GM12878 (cell line): ENCODE measurements at regions of chr14 and their contacts with region 1.

Region 1: DNA sequence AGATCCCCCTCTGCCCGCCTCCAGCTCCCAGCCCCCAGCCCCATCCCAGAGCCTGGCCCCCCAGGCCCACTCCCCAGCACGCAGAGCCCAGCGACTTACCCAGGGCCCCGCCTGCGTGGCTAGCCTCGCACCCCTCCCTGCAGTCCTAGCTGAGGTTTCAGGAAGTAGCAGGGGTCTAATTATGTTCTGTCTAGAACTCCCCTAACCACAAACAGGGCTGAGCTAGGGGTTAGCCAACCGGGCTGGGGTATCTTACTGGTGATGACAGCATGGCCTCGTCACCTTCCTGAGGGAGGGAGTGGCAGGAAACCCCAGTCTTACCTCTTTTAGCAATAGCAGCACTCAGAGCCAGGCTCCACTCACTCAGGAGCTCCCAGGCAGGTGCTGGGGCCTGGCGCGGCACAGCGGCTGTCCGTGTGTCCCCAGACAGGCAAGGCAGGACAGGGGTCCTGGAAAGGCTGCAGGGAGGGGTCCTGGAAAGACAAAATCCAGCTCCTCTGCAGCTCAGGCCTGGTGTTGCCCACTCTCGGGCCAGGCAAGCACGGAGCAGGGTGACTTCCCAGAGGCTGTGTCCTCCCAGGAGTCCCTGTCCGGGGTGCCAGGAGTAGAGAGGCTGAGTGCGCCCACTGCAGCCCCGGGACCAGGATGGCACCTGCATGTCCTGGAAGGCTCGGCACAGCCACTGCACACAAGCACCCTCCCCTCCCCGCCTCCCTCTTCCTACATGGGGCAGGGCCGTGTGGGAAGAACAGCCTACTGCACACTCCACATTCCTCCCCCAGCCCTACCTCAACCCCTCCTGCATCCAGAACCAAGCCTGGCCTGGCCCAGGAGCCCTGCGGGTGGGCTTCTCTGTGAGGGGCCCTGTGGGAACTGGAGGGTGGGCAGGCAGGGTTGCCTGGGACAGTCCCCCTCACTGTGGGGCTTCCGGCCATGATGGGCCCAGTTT is at the start of gene GPR132:
- DNase-seq: peak; percentile 93
- ATAC-seq: peak; percentile 54
- H3K4me3 ChIP-seq: peak within 1 kb of the TSS; percentile 64
- H3K27ac ChIP-seq: peak within 1 kb of the TSS; percentile 93
- H3K4me1 ChIP-seq: peaks cover 69% of the 10 kb centered on the region
- H3K27me3 ChIP-seq: no peaks in the 10 kb centered on the region
- CTCF ChIP-seq: no peak
- EP300 ChIP-seq: peak; percentile 67; a peak in 2 of 4 replicates
- POLR2A ChIP-seq: peak; percentile 91
- RAD21 ChIP-seq: no peak
- polyA plus RNA-seq, gene GPR132: 1.9 to 2.2 TPM

Region 2: DNA sequence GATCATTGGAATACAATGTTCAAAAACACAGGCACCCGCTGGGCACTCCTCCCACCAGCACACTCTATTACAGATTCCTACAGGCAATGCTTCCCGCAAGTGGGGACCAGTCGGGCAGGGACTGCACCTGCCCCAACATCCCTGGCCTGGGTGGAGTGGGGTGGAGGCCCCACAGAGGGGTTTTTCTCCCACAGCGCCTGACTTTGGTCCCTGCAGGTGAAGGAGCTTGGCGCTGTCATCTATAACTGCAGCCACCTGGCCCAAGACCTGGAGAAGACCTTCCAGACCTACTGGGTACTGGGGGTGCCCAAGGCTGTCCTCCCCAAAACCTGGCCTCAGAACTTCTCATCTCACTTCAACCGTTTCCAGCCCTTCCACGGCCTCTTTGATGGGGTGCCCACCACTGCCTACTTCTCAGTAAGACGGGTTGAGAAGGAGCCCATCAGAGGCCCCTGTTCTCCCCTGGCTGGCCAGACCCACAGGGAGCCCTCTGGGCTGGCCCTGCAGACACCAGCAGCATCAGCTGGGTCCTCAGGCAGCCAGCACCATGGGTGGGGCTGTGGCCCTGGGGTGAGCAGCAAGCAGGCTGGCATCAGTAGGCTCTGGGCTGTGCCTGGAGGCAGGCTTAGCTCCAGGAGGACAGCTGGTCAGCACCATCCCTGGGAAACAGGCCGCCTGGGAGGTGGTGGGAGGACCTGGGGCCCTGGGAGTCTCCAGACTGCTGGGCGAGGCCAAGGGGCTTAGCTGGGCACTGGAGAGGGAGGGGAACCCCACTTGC is 134.8 kb before region 1 on chr14:
- CTCF ChIA-PET with region 1: no interaction called
- POLR2A ChIA-PET with region 1: no interaction called
- RAD21 ChIA-PET with region 1: no interaction called
- SMC1A ChIA-PET with region 1: no interaction called
- in situ Hi-C with region 1: no loop called
- intact Hi-C with region 1: no loop called
- DNase-seq: no peak
- ATAC-seq: no peak
- H3K4me3 ChIP-seq: no peak overlapping the region
- H3K27ac ChIP-seq: no peak overlapping the region
- H3K4me1 ChIP-seq: peaks cover 19% of the 10 kb centered on the region
- H3K27me3 ChIP-seq: peaks cover 8 to 9% of the 10 kb centered on the region in 2 experiments
- CTCF ChIP-seq: no peak
- EP300 ChIP-seq: no peak
- POLR2A ChIP-seq: no peak
- RAD21 ChIP-seq: no peak

Region 3: GRCh38 chr14:105020815-105021655 is 44.5 kb before region 1 on chr14 and contains the start of gene CDCA4:
- CTCF ChIA-PET with region 1: interaction called, 6 read pairs
- POLR2A ChIA-PET with region 1: interaction called, 14 read pairs
- RAD21 ChIA-PET with region 1: interaction called, 25 read pairs
- SMC1A ChIA-PET with region 1: interaction called, 3 read pairs
- in situ Hi-C with region 1: no loop called
- intact Hi-C with region 1: loop called (anchors 5 kb)
- DNase-seq: peak; percentile 66
- ATAC-seq: peak; percentile 78
- H3K4me3 ChIP-seq: peak within 1 kb of the TSS; percentile 89
- H3K27ac ChIP-seq: peak within 1 kb of the TSS; percentile 93
- H3K4me1 ChIP-seq: peaks cover 19% of the 10 kb centered on the region
- H3K27me3 ChIP-seq: no peaks in the 10 kb centered on the region
- CTCF ChIP-seq: no peak
- EP300 ChIP-seq: no peak
- POLR2A ChIP-seq: peak; percentile 87
- RAD21 ChIP-seq: no peak
- polyA plus RNA-seq, gene CDCA4: 10.4 to 16.1 TPM

Region 4: GRCh38 chr14:105026803-105027563 is 38.6 kb before region 1 on chr14:
- CTCF ChIA-PET with region 1: interaction called, 3 read pairs
- POLR2A ChIA-PET with region 1: interaction called, 14 read pairs
- RAD21 ChIA-PET with region 1: interaction called, 4 read pairs
- SMC1A ChIA-PET with region 1: interaction called, 3 read pairs
- in situ Hi-C with region 1: no loop called
- intact Hi-C with region 1: loop called (anchors 5 kb)
- DNase-seq: no peak
- ATAC-seq: peak; percentile 49
- H3K4me3 ChIP-seq: no peak overlapping the region
- H3K27ac ChIP-seq: peak overlapping the region; percentile 84
- H3K4me1 ChIP-seq: peaks cover 21% of the 10 kb centered on the region
- H3K27me3 ChIP-seq: no peaks in the 10 kb centered on the region
- CTCF ChIP-seq: no peak
- EP300 ChIP-seq: no peak
- POLR2A ChIP-seq: no peak
- RAD21 ChIP-seq: no peak

Region 5: DNA sequence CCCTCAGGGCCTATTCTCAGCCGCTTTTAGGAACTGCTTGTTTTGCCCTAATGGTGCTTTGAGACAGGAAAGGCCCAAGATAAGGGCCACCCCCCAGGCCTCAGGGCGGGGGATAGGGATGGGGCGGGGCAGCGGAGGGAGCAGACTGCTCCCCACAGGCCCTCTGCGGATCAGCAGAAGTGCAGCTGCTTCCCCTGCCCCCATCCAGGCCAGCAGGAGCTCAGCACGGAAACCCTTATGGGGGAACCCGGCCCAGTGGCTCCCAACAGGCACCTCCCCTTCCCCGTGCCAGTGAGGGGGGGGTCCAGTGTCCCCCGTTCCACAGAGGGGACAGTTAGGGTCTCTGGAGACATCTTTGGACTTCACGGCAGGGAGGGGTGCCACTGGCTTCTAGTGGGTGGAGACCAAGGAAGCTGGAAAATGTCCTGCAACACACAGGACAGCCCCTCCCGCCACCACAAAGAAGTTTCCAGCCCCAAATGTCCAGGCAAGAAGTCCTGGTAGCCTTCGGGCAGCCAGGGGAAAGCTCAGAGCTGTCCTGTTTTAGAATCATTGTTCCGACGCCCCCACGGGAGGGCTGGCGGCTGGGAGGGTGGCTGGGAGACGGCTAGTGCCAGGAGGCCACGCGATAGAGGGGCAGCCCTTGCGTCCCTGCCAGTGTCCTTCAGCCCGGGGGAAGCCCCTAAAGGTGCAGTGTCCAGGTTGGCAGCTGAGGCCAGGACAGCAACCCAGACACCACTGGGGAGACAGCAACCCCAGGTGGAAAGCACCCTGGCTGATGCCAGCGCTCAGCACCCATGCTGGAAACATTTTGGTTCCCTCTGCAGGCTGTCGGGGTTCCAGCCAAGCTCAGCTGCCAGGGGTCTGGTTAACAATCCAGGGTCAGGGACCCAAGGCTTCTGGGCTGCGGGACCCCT is 10.1 kb after region 1 on chr14:
- CTCF ChIA-PET with region 1: interaction called, 10 read pairs
- POLR2A ChIA-PET with region 1: interaction called, 19 read pairs
- RAD21 ChIA-PET with region 1: interaction called, 10 read pairs
- SMC1A ChIA-PET with region 1: interaction called, 21 read pairs
- in situ Hi-C with region 1: no loop called
- intact Hi-C with region 1: no loop called
- DNase-seq: no peak
- ATAC-seq: peak; percentile 88
- H3K4me3 ChIP-seq: no peak overlapping the region
- H3K27ac ChIP-seq: peak overlapping the region; percentile 38
- H3K4me1 ChIP-seq: peaks cover 33% of the 10 kb centered on the region
- H3K27me3 ChIP-seq: no peaks in the 10 kb centered on the region
- CTCF ChIP-seq: 0 out of 6 replicates have a peak, but pooled peaks of 1 of the 3 experiments have one; percentile 3
- EP300 ChIP-seq: no peak
- POLR2A ChIP-seq: no peak
- RAD21 ChIP-seq: no peak

Region 6: GRCh38 chr14:105097794-105098127 is 32.2 kb after region 1 on chr14:
- CTCF ChIA-PET with region 1: no interaction called
- POLR2A ChIA-PET with region 1: no interaction called
- RAD21 ChIA-PET with region 1: no interaction called
- SMC1A ChIA-PET with region 1: no interaction called
- in situ Hi-C with region 1: no loop called
- intact Hi-C with region 1: no loop called
- DNase-seq: no peak
- ATAC-seq: no peak
- H3K4me3 ChIP-seq: no peak overlapping the region
- H3K27ac ChIP-seq: no peak overlapping the region
- H3K4me1 ChIP-seq: peaks cover 6% of the 10 kb centered on the region
- H3K27me3 ChIP-seq: no peaks in the 10 kb centered on the region
- CTCF ChIP-seq: no peak
- EP300 ChIP-seq: no peak
- POLR2A ChIP-seq: no peak
- RAD21 ChIP-seq: no peak

Region 7: DNA sequence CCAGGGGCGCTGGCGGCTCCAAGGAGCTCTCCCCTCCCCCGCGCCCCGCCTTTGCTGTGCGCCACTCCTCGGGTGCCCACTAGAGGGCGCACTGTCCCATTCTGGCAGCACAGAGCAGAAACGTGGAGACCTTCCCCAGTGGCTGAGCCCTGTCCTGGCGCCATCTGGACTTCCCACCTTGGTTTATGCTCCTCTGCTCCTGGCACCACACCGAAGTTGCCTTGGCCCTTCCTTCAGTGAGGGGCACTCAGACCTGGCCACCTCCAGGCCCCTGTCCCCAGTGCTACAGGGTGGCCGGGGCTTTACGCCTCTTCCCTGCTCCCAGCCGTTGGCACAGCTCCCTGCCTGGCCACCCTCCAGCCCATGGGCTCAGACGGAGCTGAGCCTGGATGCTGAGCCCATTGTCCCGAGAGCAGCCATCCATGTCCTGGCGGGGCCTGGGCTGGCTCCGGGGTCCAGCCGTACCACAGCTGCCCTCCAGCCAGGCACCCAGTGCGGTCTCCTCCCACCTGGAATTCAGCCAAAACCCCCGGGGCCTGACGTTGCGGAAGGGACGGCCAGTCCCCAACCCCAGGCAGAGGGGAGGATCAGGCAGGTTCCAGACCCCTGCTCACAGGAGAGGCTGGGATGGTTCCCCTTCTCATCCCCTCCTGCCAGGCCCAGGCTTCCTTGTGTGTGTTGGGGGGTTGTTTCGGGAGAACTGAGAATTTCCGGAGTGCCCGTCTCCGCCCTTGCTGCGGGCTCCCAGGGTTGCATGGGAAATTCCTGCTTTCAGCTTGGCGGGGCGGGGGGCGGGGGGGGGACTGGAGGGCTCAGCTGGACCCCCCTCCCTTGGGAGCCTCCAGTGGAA is 415.6 kb after region 1 on chr14:
- CTCF ChIA-PET with region 1: no interaction called
- POLR2A ChIA-PET with region 1: no interaction called
- RAD21 ChIA-PET with region 1: no interaction called
- SMC1A ChIA-PET with region 1: no interaction called
- in situ Hi-C with region 1: no loop called
- intact Hi-C with region 1: loop called (anchors 10 kb)
- DNase-seq: no peak
- ATAC-seq: peak; percentile 83
- H3K4me3 ChIP-seq: peak overlapping the region; percentile 25; the same call in 1 of the 2 replicates
- H3K27ac ChIP-seq: no peak overlapping the region; the same call in 1 of the 2 replicates
- H3K4me1 ChIP-seq: peaks cover 24% of the 10 kb centered on the region
- H3K27me3 ChIP-seq: peaks cover under 1 to 2% of the 10 kb centered on the region in 2 experiments; a peak in 3 of 4 replicates
- CTCF ChIP-seq: peak; percentile 95 to 99 (median 99); a peak in 5 of 6 replicates
- EP300 ChIP-seq: no peak
- POLR2A ChIP-seq: no peak
- RAD21 ChIP-seq: peak; percentile 72